ENCODE measurements at regions of chr3 and their contacts with region 1.

Region 1: GRCh38 chr3:134473868-134474546 is 11.8 kb downstream of the ANAPC13 start:
- DNase-seq: peak; percentile 53
- CTCF ChIP-seq: peak; percentile 53

Region 2: GRCh38 chr3:134308350-134308891 is 165.6 kb before region 1 on chr3:
- in situ Hi-C with region 1: loop called (anchors 5 kb)
- DNase-seq: peak; percentile 78
- CTCF ChIP-seq: peak; percentile 95

Region 3: GRCh38 chr3:135329479-135329878 is 855.5 kb after region 1 on chr3:
- in situ Hi-C with region 1: no loop called
- DNase-seq: no peak
- CTCF ChIP-seq: no peak

Measured in GM13976 (cell line).